HCT116 (cell line): ENCODE measurements at regions of chr12 and their contacts with region 1.

Region 1: DNA sequence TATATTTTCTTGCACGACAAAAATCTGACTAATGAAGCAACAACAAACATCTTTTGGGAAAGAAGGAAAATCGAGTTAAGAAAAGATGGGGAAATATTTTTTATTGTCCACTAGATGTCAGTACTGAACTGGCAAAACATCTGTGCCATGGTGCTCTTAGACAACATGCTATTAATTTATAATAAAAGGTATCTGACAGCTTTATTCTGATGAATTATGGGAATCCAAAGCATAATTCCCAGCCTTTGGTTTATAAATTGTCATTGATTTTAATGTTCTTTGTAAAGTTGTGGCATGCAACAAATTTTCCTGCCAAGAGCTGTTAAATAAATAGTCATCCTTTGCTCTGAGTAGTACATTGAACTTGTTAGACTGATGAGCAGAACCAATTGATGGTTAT is 231.2 kb downstream of the ETNK1 start:
- DNase-seq: peak; percentile 7
- ATAC-seq: no peak
- H3K4me3 ChIP-seq: no peak overlapping the region
- H3K27ac ChIP-seq: no peak overlapping the region
- H3K4me1 ChIP-seq: no peaks in the 10 kb centered on the region
- H3K27me3 ChIP-seq: peaks cover 17% of the 10 kb centered on the region; the same call in 1 of the 2 replicates
- CTCF ChIP-seq: peak; percentile 38 to 69 (median 40); a peak in 5 of 6 replicates
- POLR2A ChIP-seq: no peak
- RAD21 ChIP-seq: peak; percentile 61

Region 2: GRCh38 chr12:22803725-22804124 is 52.5 kb before region 1 on chr12:
- CTCF ChIA-PET with region 1: no interaction called
- POLR2A ChIA-PET with region 1: no interaction called
- RAD21 ChIA-PET with region 1: no interaction called
- intact Hi-C with region 1: no loop called
- DNase-seq: no peak
- ATAC-seq: peak; percentile 44; the same call in 1 of the 2 replicates
- H3K4me3 ChIP-seq: no peak overlapping the region
- H3K27ac ChIP-seq: no peak overlapping the region
- H3K4me1 ChIP-seq: no peaks in the 10 kb centered on the region
- H3K27me3 ChIP-seq: no peaks in the 10 kb centered on the region; the same call in 1 of the 2 replicates
- CTCF ChIP-seq: peak in 1 of 3 experiments; percentile 18; a peak in 1 of 6 replicates
- POLR2A ChIP-seq: no peak
- RAD21 ChIP-seq: no peak

Region 3: GRCh38 chr12:23014749-23015148 is 158.6 kb after region 1 on chr12:
- CTCF ChIA-PET with region 1: no interaction called
- POLR2A ChIA-PET with region 1: no interaction called
- RAD21 ChIA-PET with region 1: no interaction called
- intact Hi-C with region 1: no loop called
- DNase-seq: no peak
- ATAC-seq: no peak
- H3K4me3 ChIP-seq: no peak overlapping the region
- H3K27ac ChIP-seq: no peak overlapping the region
- H3K4me1 ChIP-seq: no peaks in the 10 kb centered on the region
- H3K27me3 ChIP-seq: no peaks in the 10 kb centered on the region
- CTCF ChIP-seq: no peak
- POLR2A ChIP-seq: no peak
- RAD21 ChIP-seq: no peak

Region 4: GRCh38 chr12:23055004-23055403 is 198.8 kb after region 1 on chr12:
- CTCF ChIA-PET with region 1: interaction called, 3 read pairs
- POLR2A ChIA-PET with region 1: no interaction called
- RAD21 ChIA-PET with region 1: no interaction called
- intact Hi-C with region 1: loop called (anchors 1 kb)
- DNase-seq: peak; percentile 8
- ATAC-seq: peak; percentile 61; the same call in 1 of the 2 replicates
- H3K4me3 ChIP-seq: no peak overlapping the region
- H3K27ac ChIP-seq: no peak overlapping the region
- H3K4me1 ChIP-seq: no peaks in the 10 kb centered on the region
- H3K27me3 ChIP-seq: no peaks in the 10 kb centered on the region
- CTCF ChIP-seq: peak; percentile 8 to 54 (median 39); a peak in 5 of 6 replicates
- POLR2A ChIP-seq: no peak
- RAD21 ChIP-seq: peak; percentile 50

Region 5: GRCh38 chr12:24596768-24597388 is 1740.7 kb after region 1 on chr12:
- CTCF ChIA-PET with region 1: no interaction called
- POLR2A ChIA-PET with region 1: no interaction called
- RAD21 ChIA-PET with region 1: no interaction called
- intact Hi-C with region 1: loop called (anchors 10 kb)
- DNase-seq: no peak
- ATAC-seq: no peak
- H3K4me3 ChIP-seq: no peak overlapping the region
- H3K27ac ChIP-seq: no peak overlapping the region
- H3K4me1 ChIP-seq: no peaks in the 10 kb centered on the region
- H3K27me3 ChIP-seq: no peaks in the 10 kb centered on the region
- CTCF ChIP-seq: peak in 2 of 3 experiments; percentile 32 to 51; a peak in 3 of 6 replicates
- POLR2A ChIP-seq: no peak
- RAD21 ChIP-seq: peak; percentile 14; the same call in 1 of the 2 replicates

Region 6: DNA sequence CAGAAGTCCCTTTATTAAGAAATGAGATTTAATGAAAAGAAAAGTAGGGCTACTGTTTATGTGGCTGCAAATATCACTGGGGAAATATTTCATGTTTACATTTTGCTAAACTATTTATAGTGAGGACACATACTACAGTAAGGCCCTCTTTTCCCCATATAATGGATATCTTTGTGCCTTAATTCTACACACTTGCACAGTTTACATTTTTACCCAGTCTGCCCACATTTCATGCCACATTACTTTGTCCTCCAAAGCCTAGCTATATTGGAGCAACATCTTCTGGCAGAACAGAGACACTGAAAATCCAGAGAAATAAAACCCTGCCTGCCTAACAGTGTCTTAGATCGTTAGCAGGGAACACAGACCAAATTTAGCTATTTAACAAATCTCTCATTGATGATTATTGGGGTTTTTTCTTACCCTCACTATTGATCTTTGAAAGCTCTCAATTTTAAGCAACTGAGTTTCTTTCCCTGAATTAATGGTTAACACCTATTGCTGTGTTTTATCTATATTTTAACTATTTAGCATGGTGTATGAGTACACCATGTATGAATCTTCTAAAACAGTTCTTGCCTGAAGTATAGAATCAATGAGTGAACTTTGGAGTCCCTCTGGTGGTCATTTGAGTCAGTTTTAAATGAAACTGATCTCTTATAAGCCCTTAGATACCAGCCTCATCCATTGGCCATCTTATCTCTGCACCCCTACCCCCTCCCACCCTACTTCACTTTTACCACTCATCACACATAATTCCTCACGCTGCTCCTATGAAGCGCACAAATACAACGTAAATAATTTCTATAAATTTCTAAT is 1922.5 kb after region 1 on chr12:
- CTCF ChIA-PET with region 1: interaction called, 4 read pairs
- POLR2A ChIA-PET with region 1: no interaction called
- RAD21 ChIA-PET with region 1: no interaction called
- intact Hi-C with region 1: loop called (anchors 1 kb)
- DNase-seq: no peak
- ATAC-seq: peak; percentile 49; the same call in 1 of the 2 replicates
- H3K4me3 ChIP-seq: no peak overlapping the region
- H3K27ac ChIP-seq: no peak overlapping the region
- H3K4me1 ChIP-seq: no peaks in the 10 kb centered on the region
- H3K27me3 ChIP-seq: no peaks in the 10 kb centered on the region
- CTCF ChIP-seq: 0 out of 6 replicates have a peak, but pooled peaks of 1 of the 3 experiments have one; percentile 20
- POLR2A ChIP-seq: no peak
- RAD21 ChIP-seq: peak; percentile 25; the same call in 1 of the 2 replicates

Region 7: GRCh38 chr12:24838531-24838950 is 1982.4 kb after region 1 on chr12:
- CTCF ChIA-PET with region 1: no interaction called
- POLR2A ChIA-PET with region 1: no interaction called
- RAD21 ChIA-PET with region 1: no interaction called
- intact Hi-C with region 1: loop called (anchors 2 kb)
- DNase-seq: no peak
- ATAC-seq: no peak
- H3K4me3 ChIP-seq: no peak overlapping the region
- H3K27ac ChIP-seq: no peak overlapping the region
- H3K4me1 ChIP-seq: no peaks in the 10 kb centered on the region
- H3K27me3 ChIP-seq: no peaks in the 10 kb centered on the region
- CTCF ChIP-seq: no peak
- POLR2A ChIP-seq: no peak
- RAD21 ChIP-seq: no peak